BJ (cell line): ENCODE measurements at regions of chr2 and their contacts with region 1.

Region 1: GRCh38 chr2:202278944-202279343 is 13.4 kb downstream of the NOP58 start:
- DNase-seq: peak; percentile 24
- H3K4me3 ChIP-seq: no peak overlapping the region
- H3K27me3 ChIP-seq: no peaks in the 10 kb centered on the region
- CTCF ChIP-seq: peak; percentile 60

Region 2: DNA sequence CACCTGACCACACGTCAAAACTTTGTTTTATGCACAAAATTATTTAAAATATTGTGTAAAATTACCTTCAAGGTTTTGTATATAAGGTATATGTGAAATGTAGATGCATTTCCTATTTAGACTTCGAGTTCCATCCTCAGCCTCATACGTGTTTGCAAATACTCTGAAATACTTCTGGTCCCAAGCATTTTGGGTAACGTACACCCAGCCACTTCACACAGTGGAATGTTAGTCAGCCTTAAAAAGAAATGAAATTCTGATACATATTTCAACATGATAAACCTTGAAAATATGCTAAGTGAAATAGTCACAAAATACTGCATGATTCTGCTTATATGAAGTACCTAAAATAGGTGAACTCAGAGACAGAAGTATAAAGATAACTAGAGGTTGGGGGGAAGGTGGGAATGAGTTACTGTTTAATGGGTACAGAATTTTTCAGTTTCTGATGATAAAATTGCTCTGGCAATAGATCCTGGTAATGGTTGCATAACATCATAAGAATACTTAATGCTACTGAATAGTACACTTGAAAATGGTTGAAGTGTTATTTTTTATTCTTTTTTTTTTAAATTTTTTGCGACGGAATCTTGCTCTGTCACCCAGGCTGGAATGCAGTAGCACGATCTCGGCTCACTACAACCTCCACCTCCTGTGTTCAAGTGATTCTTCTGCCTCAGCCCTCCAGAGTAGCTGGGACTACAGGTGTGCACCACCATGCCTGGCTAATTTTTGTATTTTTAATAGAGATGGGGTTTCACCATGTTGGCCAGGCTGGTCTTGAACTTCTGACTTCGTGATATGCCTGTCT is 10.7 kb after region 1 on chr2:
- CTCF ChIA-PET with region 1: interaction called, 15 read pairs
- POLR2A ChIA-PET with region 1: no interaction called
- DNase-seq: no peak
- H3K4me3 ChIP-seq: no peak overlapping the region
- H3K27me3 ChIP-seq: no peaks in the 10 kb centered on the region
- CTCF ChIP-seq: no peak

Region 3: DNA sequence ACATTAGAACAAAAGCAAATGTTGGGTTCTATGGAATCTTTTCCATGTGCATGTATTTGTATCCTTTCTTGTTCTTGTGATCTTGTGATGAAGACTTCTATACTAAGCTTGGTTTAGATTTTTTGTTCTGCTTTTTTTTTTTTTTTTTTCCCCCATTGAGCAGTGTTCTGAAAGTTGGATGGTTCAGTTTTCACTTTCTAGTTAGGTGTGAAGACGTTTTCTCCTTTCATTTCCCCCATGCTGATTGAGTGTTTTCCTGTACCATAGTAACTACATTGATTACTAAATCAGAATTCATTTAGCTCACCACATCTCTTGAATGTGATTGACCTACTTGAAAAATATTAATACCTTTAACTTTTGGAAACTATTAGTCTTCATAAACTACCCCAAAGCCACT is 20.8 kb after region 1 on chr2:
- CTCF ChIA-PET with region 1: no interaction called
- POLR2A ChIA-PET with region 1: no interaction called
- DNase-seq: no peak
- H3K4me3 ChIP-seq: no peak overlapping the region
- H3K27me3 ChIP-seq: no peaks in the 10 kb centered on the region
- CTCF ChIP-seq: no peak